ENCODE measurements at regions of chrX and their contacts with region 1.

Region 1: GRCh38 chrX:110992611-110993010 is 103.4 kb upstream of the PAK3 start:
- DNase-seq: no peak
- ATAC-seq: no peak
- H3K4me3 ChIP-seq: no peak overlapping the region
- H3K27ac ChIP-seq: no peak overlapping the region
- H3K4me1 ChIP-seq: no peaks in the 10 kb centered on the region
- H3K27me3 ChIP-seq: peaks cover 0 to 60% (median 0%) of the 10 kb centered on the region in 7 donors
- CTCF ChIP-seq: peak in 6 of 9 donors; percentile 14 to 48 (median 30)

Region 2: GRCh38 chrX:110938977-110939732 is 53.5 kb before region 1 on chrX:
- intact Hi-C with region 1: loop called in 1 of 10 experiments (anchors 10 kb)
- DNase-seq: no peak
- ATAC-seq: no peak
- H3K4me3 ChIP-seq: no peak overlapping the region
- H3K27ac ChIP-seq: no peak overlapping the region
- H3K4me1 ChIP-seq: no peaks in the 10 kb centered on the region
- H3K27me3 ChIP-seq: peaks cover 0 to 85% (median 0%) of the 10 kb centered on the region in 7 donors
- CTCF ChIP-seq: no peak

Region 3: DNA sequence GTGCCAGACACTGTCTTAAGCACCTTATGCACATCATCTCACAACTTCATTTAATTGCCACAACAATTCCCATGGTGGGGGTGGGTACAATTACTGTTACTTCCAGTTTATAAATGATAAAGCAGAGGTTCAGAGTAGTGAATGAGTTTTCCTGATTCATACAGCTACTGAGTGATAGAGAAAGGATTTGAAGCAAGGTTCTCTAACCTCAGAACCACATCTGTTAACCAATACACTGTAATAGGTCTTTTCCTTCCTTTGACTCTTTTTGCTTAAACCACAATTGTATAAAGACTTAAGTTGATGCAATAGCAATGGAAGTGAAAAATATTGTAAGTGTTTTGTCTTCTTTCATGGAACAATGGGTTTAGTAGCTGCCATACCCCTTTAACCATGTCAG is 59.9 kb after region 1 on chrX:
- intact Hi-C with region 1: no loop called
- DNase-seq: no peak
- ATAC-seq: no peak
- H3K4me3 ChIP-seq: no peak overlapping the region
- H3K27ac ChIP-seq: no peak overlapping the region
- H3K4me1 ChIP-seq: no peaks in the 10 kb centered on the region
- H3K27me3 ChIP-seq: peaks cover 0 to 60% (median 0%) of the 10 kb centered on the region in 7 donors
- CTCF ChIP-seq: no peak